ENCODE measurements at regions of chr3 and their contacts with region 1.

Region 1: DNA sequence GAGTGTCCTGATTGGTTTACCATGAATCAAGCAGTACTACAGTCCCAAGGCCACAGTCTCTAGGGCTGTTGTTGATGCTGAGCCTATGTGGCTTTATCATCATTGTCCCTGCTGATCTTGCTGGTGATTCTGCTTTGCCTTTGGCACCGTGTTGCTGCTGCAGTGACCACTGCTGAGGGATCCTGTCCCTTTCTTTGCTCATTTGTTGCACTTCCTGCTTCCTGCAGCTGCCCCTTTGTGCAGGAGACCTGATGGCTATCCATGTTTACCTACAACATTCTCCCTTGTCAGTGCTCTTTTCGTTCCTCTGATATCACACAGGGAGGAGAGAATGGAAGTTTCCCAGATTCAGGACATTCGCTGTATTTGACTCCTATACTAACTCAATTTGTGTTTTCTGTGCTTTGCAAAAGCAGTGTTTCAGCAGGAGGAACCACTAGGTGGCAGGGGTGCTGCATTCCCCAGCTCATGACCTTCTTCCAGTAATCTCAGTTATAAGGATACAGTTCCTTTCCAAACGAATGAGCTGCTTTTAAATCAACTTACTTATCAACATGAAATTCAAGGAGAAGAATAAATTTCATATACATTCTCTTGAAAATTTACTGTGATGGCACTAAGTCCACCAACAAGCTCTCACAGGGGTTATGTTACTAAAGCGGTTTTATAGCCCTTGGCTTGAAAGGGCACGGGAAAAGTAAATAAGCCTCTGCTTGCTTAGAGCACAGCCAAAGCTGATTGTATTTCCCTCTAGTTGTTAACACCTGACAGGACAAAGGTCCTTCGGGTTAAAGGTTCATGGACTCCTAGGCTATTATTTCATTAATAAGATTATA is 9.7 kb upstream of the THUMPD3 start:
- DNase-seq: peak; percentile 49 to 88
- H3K4me3 ChIP-seq: no peak overlapping the region
- CTCF ChIP-seq: peak in 1 of 3 donors; percentile 62
- POLR2A ChIP-seq: no peak

Region 2: GRCh38 chr3:9430733-9431132 is 77.6 kb after region 1 on chr3:
- intact Hi-C with region 1: loop called (anchors 5 kb)
- DNase-seq: no peak
- H3K4me3 ChIP-seq: no peak overlapping the region
- CTCF ChIP-seq: no peak
- POLR2A ChIP-seq: no peak

Region 3: DNA sequence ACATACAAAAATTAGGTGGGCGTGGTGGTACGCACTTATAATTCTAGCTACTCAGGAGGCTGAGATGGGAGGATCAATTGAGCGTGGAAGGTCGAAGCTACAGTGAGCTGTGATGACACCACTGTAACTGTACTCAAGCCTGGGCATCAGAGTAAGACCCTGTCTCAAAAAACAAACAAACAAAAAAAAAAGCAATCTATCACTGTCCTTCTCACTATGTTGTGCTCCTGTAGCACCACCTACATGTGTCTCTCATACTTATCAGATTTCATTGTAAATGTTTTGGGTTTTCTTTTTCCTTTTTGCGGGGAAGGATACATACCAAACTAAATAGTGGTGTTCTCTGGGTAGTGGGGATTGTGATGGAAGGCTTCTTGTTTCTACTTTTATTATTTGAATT is 687.9 kb after region 1 on chr3:
- intact Hi-C with region 1: loop called (anchors 5 kb)
- DNase-seq: no peak
- H3K4me3 ChIP-seq: no peak overlapping the region
- CTCF ChIP-seq: no peak
- POLR2A ChIP-seq: no peak

Measured in lower leg skin (tissue), 4 donors.